Activated naive CD4-positive, alpha-beta T cell treated with anti-CD3 and anti-CD28 coated beads for 36 hours (primary cell): ENCODE measurements at regions of chr7 and their contacts with region 1.

Region 1: DNA sequence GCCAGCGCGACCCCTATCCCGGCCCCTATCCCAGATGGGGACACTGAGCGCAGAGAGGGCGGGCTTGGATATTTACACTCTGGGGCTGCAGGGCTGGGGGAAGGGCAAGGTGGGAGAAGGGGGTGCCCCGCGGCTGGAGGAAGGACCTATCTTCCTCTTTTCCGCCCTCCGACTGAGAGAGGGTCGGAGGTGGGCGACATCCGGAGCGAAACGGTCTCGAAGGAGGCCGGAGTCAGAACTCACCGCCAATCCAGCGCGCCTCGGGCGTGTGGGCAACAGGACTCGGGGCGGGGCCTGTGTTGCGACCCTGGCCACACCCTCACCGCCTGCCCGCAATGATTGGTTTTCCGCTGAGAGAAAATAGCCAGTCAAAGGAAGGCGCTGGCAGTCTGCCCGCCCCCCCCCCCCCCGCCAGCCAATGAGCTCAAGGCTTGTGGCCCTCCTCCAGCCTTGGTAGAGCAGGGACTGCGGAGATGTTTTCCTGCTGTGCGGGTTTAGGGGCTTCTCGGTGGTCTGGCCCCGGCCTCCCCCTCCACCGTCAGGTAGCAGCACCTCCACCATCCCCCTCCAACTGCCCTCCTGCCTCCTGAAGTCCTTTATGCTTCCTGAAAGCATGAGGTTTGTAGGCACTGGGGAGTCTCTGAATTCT is at the start of gene METTL27:
- DNase-seq: peak; percentile 95
- H3K4me3 Mint-ChIP-seq: peak within 1 kb of the TSS; percentile 80
- H3K27ac Mint-ChIP-seq: peak within 1 kb of the TSS; percentile 50
- H3K4me1 Mint-ChIP-seq: peaks cover 5% of the 10 kb centered on the region
- H3K27me3 Mint-ChIP-seq: no peaks in the 10 kb centered on the region
- total RNA-seq, gene METTL27: 1.7 to 2.2 TPM

Region 2: DNA sequence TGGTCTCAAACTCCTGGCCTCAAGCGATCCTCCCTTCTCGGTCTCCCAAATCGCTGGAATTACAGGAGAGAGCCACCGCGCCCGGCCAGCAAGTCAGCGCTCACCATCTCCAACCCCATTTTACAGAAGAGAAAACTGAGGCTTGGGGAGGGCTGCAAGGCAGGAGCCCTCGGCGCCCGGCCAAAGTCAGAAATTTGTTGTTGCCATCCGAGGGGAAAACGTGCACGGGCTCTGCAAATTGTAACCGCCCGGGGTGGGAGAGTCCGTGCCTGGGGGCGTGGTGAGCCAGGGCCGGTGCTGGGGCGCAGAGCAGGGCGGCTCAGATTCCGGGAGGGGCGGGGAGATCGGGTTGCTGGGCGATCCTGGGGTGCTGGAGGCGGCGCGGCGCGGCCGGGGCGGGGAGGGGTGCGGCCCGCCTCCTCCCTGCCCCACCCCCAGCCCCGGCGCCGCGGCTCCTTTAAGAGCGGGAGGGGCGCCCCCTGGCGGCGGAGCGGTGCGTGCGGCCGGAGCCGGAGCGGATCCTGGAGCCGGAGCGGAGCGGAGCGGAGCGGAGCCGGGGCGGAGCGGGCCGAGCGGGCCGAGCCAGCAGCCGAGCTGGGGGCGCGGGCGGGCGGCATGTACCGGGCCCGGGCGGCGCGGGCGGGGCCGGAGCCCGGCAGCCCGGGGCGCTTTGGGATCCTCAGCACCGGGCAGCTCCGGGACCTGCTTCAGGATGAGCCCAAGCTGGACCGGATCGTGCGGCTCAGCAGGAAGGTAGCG is 174.8 kb before region 1 on chr7 and contains the start of gene VPS37D:
- CTCF ChIA-PET with region 1: interaction called, 4 read pairs
- intact Hi-C with region 1: loop called (anchors 5 kb)
- DNase-seq: peak; percentile 91
- H3K4me3 Mint-ChIP-seq: peak within 1 kb of the TSS; percentile 63
- H3K27ac Mint-ChIP-seq: no peak within 1 kb of the TSS
- H3K4me1 Mint-ChIP-seq: peaks cover 8% of the 10 kb centered on the region
- H3K27me3 Mint-ChIP-seq: peaks cover 34% of the 10 kb centered on the region
- total RNA-seq, gene VPS37D: not detected

Region 3: GRCh38 chr7:73758581-73759138 is 83.7 kb before region 1 on chr7:
- CTCF ChIA-PET with region 1: no interaction called
- intact Hi-C with region 1: no loop called
- DNase-seq: no peak
- H3K4me3 Mint-ChIP-seq: no peak overlapping the region
- H3K27ac Mint-ChIP-seq: no peak overlapping the region
- H3K4me1 Mint-ChIP-seq: no peaks in the 10 kb centered on the region
- H3K27me3 Mint-ChIP-seq: no peaks in the 10 kb centered on the region

Region 4: DNA sequence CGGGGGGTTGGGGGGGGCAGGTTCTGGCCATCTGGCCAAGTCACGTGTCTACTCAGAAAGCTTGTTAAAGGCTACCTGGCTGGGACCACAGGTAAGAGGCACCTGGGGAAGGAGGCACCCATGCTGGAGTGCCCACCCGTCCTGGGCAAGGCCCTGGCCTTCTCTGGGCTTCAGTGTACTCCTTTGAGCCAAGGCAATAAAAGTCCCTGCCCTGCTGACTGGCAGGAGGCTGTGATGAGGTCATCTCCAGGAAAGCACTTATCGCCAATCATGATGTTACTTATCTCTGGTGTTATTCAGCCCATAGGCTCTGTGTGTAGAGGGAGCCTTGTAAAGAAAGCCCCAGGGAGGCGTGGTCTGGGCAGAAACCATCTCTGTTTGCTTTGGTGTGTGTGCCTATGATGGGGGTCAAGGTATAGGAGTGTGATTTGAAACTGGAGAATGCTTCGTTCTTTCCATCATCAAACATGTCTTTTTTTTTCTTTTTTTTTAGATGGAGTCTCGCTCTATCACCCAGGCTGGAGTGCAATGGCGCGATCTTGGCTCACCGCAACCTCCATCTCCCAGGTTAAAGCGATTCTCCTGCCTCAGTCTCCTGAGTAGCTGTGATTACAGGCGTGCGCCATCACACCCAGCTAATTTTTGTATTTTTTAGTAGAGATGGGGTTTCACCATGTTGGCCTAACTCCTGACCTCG is 14.1 kb before region 1 on chr7:
- CTCF ChIA-PET with region 1: interaction called, 3 read pairs
- intact Hi-C with region 1: loop called (anchors 2 kb)
- DNase-seq: peak; percentile 66
- H3K4me3 Mint-ChIP-seq: no peak overlapping the region
- H3K27ac Mint-ChIP-seq: no peak overlapping the region
- H3K4me1 Mint-ChIP-seq: peaks cover 25% of the 10 kb centered on the region
- H3K27me3 Mint-ChIP-seq: peaks cover 5% of the 10 kb centered on the region

Region 5: GRCh38 chr7:74083117-74083876 is 240.9 kb after region 1 on chr7 and contains the start of gene LIMK1:
- CTCF ChIA-PET with region 1: no interaction called
- intact Hi-C with region 1: loop called (anchors 5 kb)
- DNase-seq: peak; percentile 80
- H3K4me3 Mint-ChIP-seq: peak within 1 kb of the TSS; percentile 78
- H3K27ac Mint-ChIP-seq: peak within 1 kb of the TSS; percentile 76
- H3K4me1 Mint-ChIP-seq: peaks cover 10% of the 10 kb centered on the region
- H3K27me3 Mint-ChIP-seq: no peaks in the 10 kb centered on the region
- total RNA-seq, gene LIMK1: 7.9 to 9.2 TPM